GM12878 (cell line): ENCODE measurements at regions of chr1 and their contacts with region 1.

Region 1: GRCh38 chr1:202192770-202193613 is 607 bp upstream of the LGR6 start:
- DNase-seq: no peak
- ATAC-seq: peak; percentile 80
- H3K4me3 ChIP-seq: no peak overlapping the region
- H3K27ac ChIP-seq: no peak overlapping the region
- H3K4me1 ChIP-seq: no peaks in the 10 kb centered on the region
- H3K27me3 ChIP-seq: peaks cover 7 to 11% of the 10 kb centered on the region in 2 experiments
- CTCF ChIP-seq: peak; percentile 81 to 95 (median 86)
- EP300 ChIP-seq: no peak
- POLR2A ChIP-seq: no peak
- RAD21 ChIP-seq: peak; percentile 71

Region 2: GRCh38 chr1:202154766-202155477 is 38.1 kb before region 1 on chr1:
- CTCF ChIA-PET with region 1: interaction called, 171 read pairs
- POLR2A ChIA-PET with region 1: no interaction called
- RAD21 ChIA-PET with region 1: interaction called, 19 read pairs
- SMC1A ChIA-PET with region 1: interaction called, 11 read pairs
- in situ Hi-C with region 1: no loop called
- intact Hi-C with region 1: no loop called
- DNase-seq: no peak
- ATAC-seq: peak; percentile 50
- H3K4me3 ChIP-seq: no peak overlapping the region
- H3K27ac ChIP-seq: no peak overlapping the region
- H3K4me1 ChIP-seq: peaks cover 16% of the 10 kb centered on the region
- H3K27me3 ChIP-seq: no peaks in the 10 kb centered on the region
- CTCF ChIP-seq: peak; percentile 65 to 70 (median 68); a peak in 5 of 6 replicates
- EP300 ChIP-seq: no peak
- POLR2A ChIP-seq: no peak
- RAD21 ChIP-seq: peak; percentile 65

Region 3: DNA sequence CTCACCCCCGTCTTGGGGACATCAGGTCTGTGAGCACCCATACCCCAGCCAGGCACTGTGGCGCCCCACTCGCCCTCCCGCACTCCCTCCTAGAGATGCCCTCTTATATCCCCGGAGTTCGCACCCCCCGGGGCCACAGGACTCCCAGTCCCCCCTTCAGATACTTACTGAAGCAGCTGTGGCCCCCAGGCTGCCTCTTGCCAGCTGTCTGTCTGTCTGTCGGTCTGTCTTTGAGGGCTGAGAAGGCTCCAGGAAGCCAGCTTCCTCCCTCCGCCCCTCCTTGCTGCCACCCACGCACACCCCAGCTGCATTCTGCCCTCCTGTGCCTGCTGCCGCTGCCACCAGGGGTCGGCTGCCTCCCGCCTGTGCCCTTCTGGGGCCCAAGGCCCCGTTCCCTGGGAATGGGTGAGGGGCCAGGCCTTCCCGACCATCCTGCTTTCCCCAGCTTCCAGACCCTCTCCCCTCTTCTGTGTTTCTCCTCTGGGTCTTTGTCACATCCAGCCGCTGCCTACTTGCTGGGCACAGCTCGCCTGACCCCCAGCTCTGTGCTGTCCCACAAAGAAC is 32.5 kb before region 1 on chr1 and contains the start of gene PTPN7:
- CTCF ChIA-PET with region 1: interaction called, 171 read pairs
- POLR2A ChIA-PET with region 1: interaction called, 4 read pairs
- RAD21 ChIA-PET with region 1: interaction called, 19 read pairs
- SMC1A ChIA-PET with region 1: interaction called, 11 read pairs
- in situ Hi-C with region 1: no loop called
- intact Hi-C with region 1: no loop called
- DNase-seq: peak; percentile 48
- ATAC-seq: peak; percentile 67
- H3K4me3 ChIP-seq: peak within 1 kb of the TSS; percentile 85
- H3K27ac ChIP-seq: peak within 1 kb of the TSS; percentile 97
- H3K4me1 ChIP-seq: peaks cover 58% of the 10 kb centered on the region
- H3K27me3 ChIP-seq: no peaks in the 10 kb centered on the region
- CTCF ChIP-seq: peak; percentile 55 to 79 (median 66)
- EP300 ChIP-seq: no peak
- POLR2A ChIP-seq: peak; percentile 51
- RAD21 ChIP-seq: peak; percentile 42; the same call in 1 of the 2 replicates
- polyA plus RNA-seq, gene PTPN7: 7.9 to 14.2 TPM

Region 4: DNA sequence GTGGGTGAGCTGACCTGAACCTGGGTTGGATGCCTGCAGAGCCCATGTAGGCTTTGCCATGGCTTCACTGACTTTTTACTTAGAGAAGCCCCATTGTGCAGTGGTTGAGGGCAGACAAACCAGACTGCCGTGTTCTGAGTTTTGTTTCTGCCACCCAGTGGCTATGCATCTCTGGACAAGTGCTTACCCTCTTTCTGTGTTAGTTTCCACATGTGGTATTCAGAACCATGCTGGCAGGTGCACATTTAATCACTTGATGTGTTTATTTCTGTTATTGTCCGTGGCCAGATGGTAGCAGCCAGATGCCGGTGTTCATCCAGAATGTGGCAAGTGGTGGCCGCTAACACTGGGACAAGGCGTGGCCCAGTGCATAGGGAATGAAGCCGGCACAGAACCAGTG is 22.3 kb before region 1 on chr1:
- CTCF ChIA-PET with region 1: interaction called, 171 read pairs
- POLR2A ChIA-PET with region 1: no interaction called
- RAD21 ChIA-PET with region 1: interaction called, 4 read pairs
- SMC1A ChIA-PET with region 1: no interaction called
- in situ Hi-C with region 1: no loop called
- intact Hi-C with region 1: no loop called
- DNase-seq: no peak
- ATAC-seq: peak; percentile 59
- H3K4me3 ChIP-seq: no peak overlapping the region
- H3K27ac ChIP-seq: no peak overlapping the region
- H3K4me1 ChIP-seq: peaks cover 5% of the 10 kb centered on the region
- H3K27me3 ChIP-seq: no peaks in the 10 kb centered on the region
- CTCF ChIP-seq: peak in 1 of 3 experiments; percentile 28; a peak in 1 of 6 replicates
- EP300 ChIP-seq: no peak
- POLR2A ChIP-seq: no peak
- RAD21 ChIP-seq: no peak

Region 5: DNA sequence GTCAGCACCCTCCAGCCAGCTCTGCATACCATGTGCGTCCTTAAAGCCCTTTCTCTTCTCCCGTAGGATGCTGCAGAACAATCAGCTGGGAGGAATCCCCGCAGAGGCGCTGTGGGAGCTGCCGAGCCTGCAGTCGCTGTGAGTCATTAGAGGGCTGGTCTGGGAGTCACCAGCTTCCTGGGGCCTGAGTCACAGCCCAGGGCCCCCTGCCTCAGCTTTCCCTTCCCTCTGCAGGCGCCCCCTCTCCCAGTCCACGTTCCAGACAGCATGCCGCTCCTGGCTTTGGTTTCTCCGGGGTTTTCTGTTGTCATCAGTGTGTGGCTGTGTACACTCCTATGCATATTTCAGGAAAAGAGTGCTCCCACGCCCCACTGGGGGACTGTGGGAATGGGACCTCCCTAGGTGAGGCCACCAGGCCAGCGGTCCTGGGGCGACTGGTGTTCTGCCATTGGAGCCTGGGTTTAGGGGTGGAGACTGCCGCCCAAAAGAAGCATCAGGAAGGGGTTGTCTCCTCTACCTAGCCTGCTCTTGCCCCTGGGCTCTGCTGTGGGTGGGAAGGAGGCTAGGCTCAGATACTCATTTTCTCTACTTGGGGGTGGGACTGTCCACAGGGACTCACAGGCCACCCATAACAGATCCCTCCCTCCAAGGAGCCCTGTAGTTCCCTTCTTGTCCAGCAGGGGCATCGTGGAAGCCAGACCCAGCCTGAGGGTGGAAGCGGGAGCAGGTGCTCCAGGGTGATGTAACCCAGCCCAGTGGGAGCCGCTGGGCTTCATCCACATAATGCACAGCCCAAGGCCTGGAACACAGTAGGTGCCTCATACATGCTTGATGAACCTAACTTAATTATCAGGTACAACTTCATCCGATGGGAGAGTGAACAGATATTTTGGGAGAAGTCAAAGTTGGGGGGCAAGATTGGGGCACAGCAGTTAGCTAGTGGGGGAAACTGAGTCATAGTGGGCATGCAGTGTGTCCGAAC is 43.2 kb after region 1 on chr1:
- CTCF ChIA-PET with region 1: interaction called, 8 read pairs
- POLR2A ChIA-PET with region 1: no interaction called
- RAD21 ChIA-PET with region 1: interaction called, 3 read pairs
- SMC1A ChIA-PET with region 1: no interaction called
- in situ Hi-C with region 1: no loop called
- intact Hi-C with region 1: loop called (anchors 5 kb)
- DNase-seq: peak; percentile 12
- ATAC-seq: peak; percentile 94
- H3K4me3 ChIP-seq: no peak overlapping the region
- H3K27ac ChIP-seq: no peak overlapping the region
- H3K4me1 ChIP-seq: peaks cover 3% of the 10 kb centered on the region; the same call in 1 of the 2 replicates
- H3K27me3 ChIP-seq: no peaks in the 10 kb centered on the region; a peak in 1 of 4 replicates
- CTCF ChIP-seq: peak; percentile 68 to 98 (median 92)
- EP300 ChIP-seq: no peak
- POLR2A ChIP-seq: no peak
- RAD21 ChIP-seq: peak; percentile 26; the same call in 1 of the 2 replicates

Region 6: DNA sequence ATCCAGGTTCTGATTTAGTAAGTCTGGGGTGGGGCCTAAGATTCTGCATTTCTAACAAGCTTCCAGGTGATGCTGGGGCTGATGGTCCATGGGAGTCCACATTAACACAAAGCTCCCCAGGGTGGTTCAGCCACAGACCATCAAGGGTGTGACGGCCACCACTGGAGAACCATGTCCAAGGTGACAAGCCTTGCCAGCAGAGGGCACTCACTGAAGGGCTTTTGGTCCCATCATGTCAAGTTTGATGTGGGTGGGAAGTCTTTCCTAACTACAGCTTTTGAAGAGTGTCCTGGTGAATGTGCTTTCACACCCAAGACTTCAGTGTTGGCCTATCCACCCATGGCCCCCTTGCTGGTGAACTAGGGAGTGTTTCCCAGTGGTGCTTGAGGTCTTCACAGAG is 81.6 kb after region 1 on chr1:
- CTCF ChIA-PET with region 1: interaction called, 21 read pairs
- POLR2A ChIA-PET with region 1: no interaction called
- RAD21 ChIA-PET with region 1: interaction called, 6 read pairs
- SMC1A ChIA-PET with region 1: interaction called, 7 read pairs
- in situ Hi-C with region 1: no loop called
- intact Hi-C with region 1: loop called (anchors 10 kb)
- DNase-seq: no peak
- ATAC-seq: peak; percentile 82
- H3K4me3 ChIP-seq: no peak overlapping the region
- H3K27ac ChIP-seq: no peak overlapping the region
- H3K4me1 ChIP-seq: no peaks in the 10 kb centered on the region
- H3K27me3 ChIP-seq: peaks cover 0 to 2% of the 10 kb centered on the region in 2 experiments; a peak in 1 of 4 replicates
- CTCF ChIP-seq: peak; percentile 48 to 71 (median 57)
- EP300 ChIP-seq: no peak
- POLR2A ChIP-seq: no peak
- RAD21 ChIP-seq: peak; percentile 48

Region 7: GRCh38 chr1:202810615-202811295 is 617.8 kb after region 1 on chr1 and contains the start of gene PCAT6:
- CTCF ChIA-PET with region 1: no interaction called
- POLR2A ChIA-PET with region 1: no interaction called
- RAD21 ChIA-PET with region 1: no interaction called
- SMC1A ChIA-PET with region 1: no interaction called
- in situ Hi-C with region 1: no loop called
- intact Hi-C with region 1: no loop called
- DNase-seq: peak; percentile 21
- ATAC-seq: peak; percentile 88
- H3K4me3 ChIP-seq: peak within 1 kb of the TSS; percentile 81
- H3K27ac ChIP-seq: no peak within 1 kb of the TSS
- H3K4me1 ChIP-seq: peaks cover 3% of the 10 kb centered on the region; the same call in 1 of the 2 replicates
- H3K27me3 ChIP-seq: no peaks in the 10 kb centered on the region; a peak in 3 of 4 replicates
- CTCF ChIP-seq: no peak
- EP300 ChIP-seq: 0 out of 4 replicates have a peak, but pooled peaks of 1 of the 2 experiments have one; percentile 5
- POLR2A ChIP-seq: peak; percentile 86
- RAD21 ChIP-seq: no peak
- polyA plus RNA-seq, gene PCAT6: 0.16 TPM in 1 of 2 experiments, not detected in the other